GM12878 (cell line): ENCODE measurements at regions of chr1 and their contacts with region 1.

Region 1: GRCh38 chr1:175124861-175125260 is 57.2 kb downstream of the TNN start:
- DNase-seq: no peak
- ATAC-seq: no peak
- H3K4me3 ChIP-seq: no peak overlapping the region
- H3K27ac ChIP-seq: no peak overlapping the region
- H3K4me1 ChIP-seq: no peaks in the 10 kb centered on the region
- H3K27me3 ChIP-seq: no peaks in the 10 kb centered on the region
- CTCF ChIP-seq: no peak
- EP300 ChIP-seq: no peak
- POLR2A ChIP-seq: no peak
- RAD21 ChIP-seq: no peak

Region 2: GRCh38 chr1:174769961-174770549 is 354.8 kb before region 1 on chr1:
- CTCF ChIA-PET with region 1: interaction called, 11 read pairs
- POLR2A ChIA-PET with region 1: no interaction called
- RAD21 ChIA-PET with region 1: interaction called, 5 read pairs
- SMC1A ChIA-PET with region 1: interaction called, 6 read pairs
- in situ Hi-C with region 1: loop called (anchors 5 kb)
- intact Hi-C with region 1: loop called (anchors 5 kb)
- DNase-seq: peak; percentile 17
- ATAC-seq: peak; percentile 71
- H3K4me3 ChIP-seq: no peak overlapping the region
- H3K27ac ChIP-seq: no peak overlapping the region
- H3K4me1 ChIP-seq: no peaks in the 10 kb centered on the region
- H3K27me3 ChIP-seq: no peaks in the 10 kb centered on the region
- CTCF ChIP-seq: peak; percentile 54 to 80 (median 61)
- EP300 ChIP-seq: no peak
- POLR2A ChIP-seq: no peak
- RAD21 ChIP-seq: peak; percentile 82

Region 3: GRCh38 chr1:175023043-175023921 is 101.6 kb before region 1 on chr1 and contains the start of gene MRPS14:
- CTCF ChIA-PET with region 1: interaction called, 199 read pairs
- POLR2A ChIA-PET with region 1: no interaction called
- RAD21 ChIA-PET with region 1: interaction called, 96 read pairs
- SMC1A ChIA-PET with region 1: interaction called, 56 read pairs
- in situ Hi-C with region 1: no loop called
- intact Hi-C with region 1: no loop called
- DNase-seq: peak; percentile 95
- ATAC-seq: peak; percentile 98
- H3K4me3 ChIP-seq: peak within 1 kb of the TSS; percentile 89
- H3K27ac ChIP-seq: peak within 1 kb of the TSS; percentile 90
- H3K4me1 ChIP-seq: no peaks in the 10 kb centered on the region; the same call in 1 of the 2 replicates
- H3K27me3 ChIP-seq: no peaks in the 10 kb centered on the region
- CTCF ChIP-seq: no peak
- EP300 ChIP-seq: no peak
- POLR2A ChIP-seq: peak; percentile 90
- RAD21 ChIP-seq: no peak
- polyA plus RNA-seq, gene MRPS14: 223 to 224 TPM

Region 4: DNA sequence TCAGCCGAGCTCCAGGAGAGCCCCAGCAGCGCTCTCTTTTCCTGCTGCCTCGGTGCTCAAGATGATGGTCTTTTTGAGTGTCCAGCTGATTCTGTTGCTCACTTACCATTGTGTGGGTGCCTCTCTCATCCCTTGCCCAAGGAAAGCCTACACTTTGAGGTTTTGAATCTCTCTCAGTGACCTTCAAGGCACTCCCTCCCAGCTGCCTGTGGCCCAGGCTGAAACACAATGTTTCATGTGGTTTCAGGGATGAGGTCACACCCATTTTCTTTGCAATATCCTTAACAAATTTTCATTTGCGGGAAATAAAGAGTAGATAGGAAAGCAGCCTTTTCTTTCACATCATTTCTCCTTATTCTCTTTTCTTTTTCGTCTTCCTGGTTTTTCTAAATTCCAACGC is 89.0 kb before region 1 on chr1:
- CTCF ChIA-PET with region 1: interaction called, 199 read pairs
- POLR2A ChIA-PET with region 1: interaction called, 4 read pairs
- RAD21 ChIA-PET with region 1: interaction called, 20 read pairs
- SMC1A ChIA-PET with region 1: interaction called, 27 read pairs
- in situ Hi-C with region 1: no loop called
- intact Hi-C with region 1: no loop called
- DNase-seq: no peak
- ATAC-seq: no peak
- H3K4me3 ChIP-seq: no peak overlapping the region
- H3K27ac ChIP-seq: no peak overlapping the region
- H3K4me1 ChIP-seq: no peaks in the 10 kb centered on the region
- H3K27me3 ChIP-seq: peaks cover 0 to 3% of the 10 kb centered on the region in 2 experiments; a peak in 2 of 4 replicates
- CTCF ChIP-seq: no peak
- EP300 ChIP-seq: no peak
- POLR2A ChIP-seq: no peak
- RAD21 ChIP-seq: no peak